ENCODE measurements at regions of chr2 and their contacts with region 1.

Region 1: DNA sequence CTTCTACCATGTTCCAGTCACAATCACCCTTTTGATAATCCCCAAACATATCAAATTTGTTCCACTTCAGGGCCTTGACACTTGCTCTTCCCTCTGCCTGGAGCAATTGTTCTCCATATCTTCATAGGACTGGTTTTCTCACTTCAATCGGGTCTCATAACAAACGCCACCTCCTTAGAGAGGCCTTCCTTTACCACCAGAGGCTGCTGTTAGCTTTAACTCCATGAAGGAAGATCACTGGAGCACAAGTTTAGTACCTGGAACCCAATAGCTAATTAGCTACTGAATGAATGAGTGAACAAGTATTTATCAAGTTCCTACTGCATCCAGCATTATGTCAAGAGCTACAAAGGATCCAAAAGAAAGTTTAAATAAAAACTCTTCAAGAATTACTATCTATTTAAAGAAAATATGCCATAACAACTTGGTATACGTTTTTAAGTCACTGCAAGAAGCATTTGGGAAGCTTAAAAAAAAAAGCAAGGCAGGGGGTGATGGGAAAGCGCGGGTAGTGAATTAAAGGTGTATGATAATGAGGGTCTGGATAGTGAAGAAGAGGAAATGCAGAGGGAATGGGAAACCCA is 58.8 kb downstream of the BAZ2B start:
- DNase-seq: peak; percentile 47
- ATAC-seq: peak; percentile 67
- H3K4me3 ChIP-seq: no peak overlapping the region
- H3K27ac ChIP-seq: no peak overlapping the region
- H3K4me1 ChIP-seq: no peaks in the 10 kb centered on the region
- H3K27me3 ChIP-seq: no peaks in the 10 kb centered on the region
- CTCF ChIP-seq: peak; percentile 70

Region 2: GRCh38 chr2:159013103-159013502 is 544.4 kb before region 1 on chr2:
- CTCF ChIA-PET with region 1: no interaction called
- POLR2A ChIA-PET with region 1: no interaction called
- intact Hi-C with region 1: no loop called
- DNase-seq: no peak
- ATAC-seq: no peak
- H3K4me3 ChIP-seq: no peak overlapping the region
- H3K27ac ChIP-seq: no peak overlapping the region
- H3K4me1 ChIP-seq: peaks cover 20% of the 10 kb centered on the region
- H3K27me3 ChIP-seq: no peaks in the 10 kb centered on the region
- CTCF ChIP-seq: no peak

Region 3: DNA sequence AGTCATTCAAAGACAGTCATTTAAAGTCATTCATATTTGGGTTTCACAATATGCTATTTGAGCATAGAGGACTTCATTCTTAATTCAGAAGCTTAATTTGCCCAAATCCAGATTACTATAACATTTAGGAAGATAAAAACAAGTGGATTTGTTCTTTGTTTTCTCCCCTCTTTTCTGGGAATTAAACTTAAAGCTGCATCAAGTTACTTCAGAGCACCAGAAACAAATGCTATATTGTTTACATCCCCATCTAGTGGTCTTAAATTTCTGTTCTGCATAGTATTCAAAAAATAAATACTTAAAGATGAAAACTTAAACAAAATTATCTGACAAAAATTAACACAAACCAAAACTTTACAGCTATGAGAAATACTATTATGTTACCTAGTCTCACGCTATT is 120.1 kb after region 1 on chr2:
- CTCF ChIA-PET with region 1: no interaction called
- POLR2A ChIA-PET with region 1: no interaction called
- intact Hi-C with region 1: loop called (anchors 1 kb)
- DNase-seq: peak; percentile 30
- ATAC-seq: no peak; the same call in 1 of the 2 replicates
- H3K4me3 ChIP-seq: no peak overlapping the region
- H3K27ac ChIP-seq: no peak overlapping the region
- H3K4me1 ChIP-seq: no peaks in the 10 kb centered on the region
- H3K27me3 ChIP-seq: no peaks in the 10 kb centered on the region
- CTCF ChIP-seq: peak; percentile 66

Region 4: DNA sequence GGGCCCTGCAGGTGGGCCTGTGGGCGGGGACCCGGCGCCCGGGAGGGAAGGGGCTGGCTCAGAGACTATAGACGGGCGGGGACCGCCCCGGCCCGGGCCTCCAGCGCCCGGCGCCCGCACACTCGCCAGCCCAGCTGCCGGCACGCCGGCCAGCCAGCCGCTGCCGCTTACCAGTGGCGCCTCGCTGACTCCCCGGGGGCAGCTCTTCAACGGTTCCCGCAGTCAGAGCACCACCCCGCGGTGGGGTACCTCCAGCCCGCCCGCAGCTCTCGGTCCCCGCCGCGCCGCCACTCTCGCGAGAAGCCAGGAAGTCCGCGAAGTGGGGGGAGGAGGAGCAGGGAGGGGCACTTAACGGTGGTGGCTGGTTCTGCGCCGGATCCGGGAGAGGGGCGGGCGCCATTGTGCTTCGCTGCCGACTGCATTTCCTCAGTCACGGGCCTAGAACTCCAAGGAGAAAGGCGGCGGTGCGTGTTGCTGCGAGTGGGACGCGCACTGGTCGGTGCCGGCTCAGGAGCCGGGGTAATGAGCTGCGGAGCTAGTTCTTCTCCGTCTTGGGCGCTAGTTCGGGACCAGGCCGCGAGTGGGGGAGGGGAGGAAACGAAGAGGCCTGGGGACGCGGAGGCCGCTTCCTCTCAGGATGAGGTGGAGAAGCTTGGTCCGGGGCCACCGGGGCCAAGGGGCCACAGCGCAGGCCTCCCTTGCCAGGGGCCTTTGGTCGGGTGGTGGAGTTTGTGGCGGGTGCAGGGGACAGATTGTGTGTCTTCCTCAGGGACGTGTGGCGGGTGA is 154.8 kb after region 1 on chr2 and contains the start of gene MARCHF7:
- CTCF ChIA-PET with region 1: interaction called, 7 read pairs
- POLR2A ChIA-PET with region 1: interaction called, 16 read pairs
- intact Hi-C with region 1: no loop called
- DNase-seq: peak; percentile 94
- ATAC-seq: peak; percentile 81
- H3K4me3 ChIP-seq: peak within 1 kb of the TSS; percentile 100
- H3K27ac ChIP-seq: peak within 1 kb of the TSS; percentile 82
- H3K4me1 ChIP-seq: peaks cover 30% of the 10 kb centered on the region
- H3K27me3 ChIP-seq: no peaks in the 10 kb centered on the region
- CTCF ChIP-seq: peak; percentile 61
- total RNA-seq, gene MARCHF7: 53.2 and 84.3 TPM in 2 replicates

Measured in PC-3 (cell line).